Posterior vena cava (tissue), 2 donors: ENCODE measurements at regions of chr4 and their contacts with region 1.

Region 1: GRCh38 chr4:70801265-70801809 is 38.4 kb downstream of the GRSF1 start:
- DNase-seq: no peak

Region 2: GRCh38 chr4:70080205-70080604 is 721.1 kb before region 1 on chr4:
- intact Hi-C with region 1: loop called in 1 of 2 experiments (anchors 5 kb)
- DNase-seq: no peak

Region 3: DNA sequence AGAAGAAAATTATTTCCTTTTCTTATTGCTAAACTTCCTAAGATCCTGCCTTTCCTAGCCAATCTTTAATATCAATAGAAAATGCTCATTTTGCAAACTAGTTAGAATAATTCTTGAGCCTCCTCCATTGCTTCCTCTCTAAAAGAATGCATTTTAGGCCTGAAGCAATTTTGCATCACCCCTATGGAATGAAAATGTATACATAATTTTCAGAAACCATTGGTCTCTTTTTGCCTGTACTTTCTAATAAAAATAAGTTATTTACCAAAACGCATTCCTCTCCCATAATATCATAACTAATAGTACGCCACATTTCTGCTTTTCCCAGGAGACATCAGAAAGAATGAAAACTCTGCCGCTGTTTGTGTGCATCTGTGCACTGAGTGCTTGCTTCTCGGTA is 327.7 kb before region 1 on chr4:
- intact Hi-C with region 1: no loop called
- DNase-seq: no peak

Region 4: GRCh38 chr4:70522576-70522975 is 278.8 kb before region 1 on chr4:
- intact Hi-C with region 1: no loop called
- DNase-seq: no peak

Region 5: GRCh38 chr4:70788733-70789132 is 12.6 kb before region 1 on chr4:
- intact Hi-C with region 1: loop called in 1 of 2 experiments (anchors 1 kb)
- DNase-seq: no peak